Adrenal gland (tissue), 19 donors: ENCODE measurements at regions of chr20 and their contacts with region 1.

Region 1: DNA sequence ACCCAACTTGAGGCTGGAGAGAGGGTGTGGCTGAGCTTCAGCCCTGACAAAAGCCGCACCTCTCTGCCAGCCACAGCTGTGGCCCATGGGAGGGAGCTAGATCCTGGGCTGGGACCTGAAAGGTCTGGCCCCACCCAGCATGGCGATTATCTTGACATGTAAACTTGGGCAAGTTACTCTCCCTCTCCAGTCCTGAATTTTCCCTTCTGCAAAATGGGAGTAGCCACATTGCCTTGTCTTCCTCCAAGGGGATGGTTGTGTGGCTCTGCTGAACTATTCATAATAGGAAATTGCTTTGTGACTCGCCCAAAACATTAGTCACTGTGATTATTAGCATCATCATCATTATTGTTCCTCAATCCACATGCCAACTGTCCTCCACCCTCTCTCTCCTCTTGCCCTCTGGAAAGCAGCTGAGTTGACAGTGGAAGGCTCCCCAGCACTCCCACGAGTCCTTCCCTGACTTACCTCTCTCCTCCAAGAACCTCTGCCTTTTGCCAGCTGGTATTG is 23.0 kb upstream of the RBPJL start:
- DNase-seq: no peak
- H3K4me3 ChIP-seq: no peak overlapping the region
- H3K27ac ChIP-seq: no peak overlapping the region
- H3K4me1 ChIP-seq: no peaks in the 10 kb centered on the region
- H3K27me3 ChIP-seq: peaks cover 9% of the 10 kb centered on the region
- CTCF ChIP-seq: no peak
- POLR2A ChIP-seq: no peak

Region 2: GRCh38 chr20:45095753-45096371 is 187.7 kb before region 1 on chr20:
- intact Hi-C with region 1: loop called (anchors 5 to 10 kb)
- DNase-seq: peak; percentile 55 to 79 (median 70)
- H3K4me3 ChIP-seq: no peak overlapping the region
- H3K27ac ChIP-seq: no peak overlapping the region
- H3K4me1 ChIP-seq: peaks cover 4 to 16% of the 10 kb centered on the region in 2 donors
- H3K27me3 ChIP-seq: peaks cover 32% of the 10 kb centered on the region
- CTCF ChIP-seq: peak; percentile 58 to 77 (median 72)
- POLR2A ChIP-seq: no peak

Region 3: DNA sequence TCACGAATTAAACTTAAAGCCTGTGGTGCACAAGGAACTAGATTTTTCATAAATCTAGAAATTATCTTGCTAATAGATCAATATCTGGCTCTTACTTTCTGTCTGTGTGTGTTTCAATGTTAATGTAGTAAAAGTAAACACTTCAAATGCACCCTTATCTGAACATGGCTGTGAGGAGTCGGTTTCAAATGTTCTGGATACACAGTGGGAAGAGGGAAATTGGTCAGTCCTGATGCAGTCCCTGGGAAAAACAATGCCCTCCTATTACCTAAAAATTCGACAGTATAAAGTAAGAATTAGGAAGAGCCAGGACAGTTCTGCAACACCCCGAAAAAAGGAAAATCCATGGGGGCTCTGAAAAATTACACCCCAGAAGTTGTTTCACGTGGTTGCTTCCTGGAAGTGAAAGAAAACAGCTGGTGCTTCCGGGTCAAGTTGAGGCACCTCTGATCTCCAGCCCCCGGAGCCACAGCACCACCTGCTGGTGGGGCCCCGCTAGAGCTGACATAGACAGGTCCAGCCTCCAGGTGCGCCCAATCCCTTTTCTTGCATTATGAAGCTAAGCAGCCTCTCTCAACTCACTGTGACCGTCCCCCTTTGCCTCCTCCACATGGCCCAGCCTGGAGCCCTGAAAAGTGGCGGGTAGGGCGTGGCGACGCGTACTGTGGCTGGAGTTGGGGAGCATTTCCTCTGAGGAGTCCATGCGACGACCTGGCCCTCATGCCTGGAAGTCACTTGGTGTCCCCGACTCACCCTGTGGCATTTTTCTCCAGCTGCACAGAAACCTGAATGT is 54.1 kb before region 1 on chr20:
- intact Hi-C with region 1: no loop called
- DNase-seq: peak in 2 of 7 donors; percentile 11 to 29
- H3K4me3 ChIP-seq: no peak overlapping the region
- H3K27ac ChIP-seq: no peak overlapping the region
- H3K4me1 ChIP-seq: no peaks in the 10 kb centered on the region
- H3K27me3 ChIP-seq: peaks cover 7% of the 10 kb centered on the region
- CTCF ChIP-seq: peak in 3 of 6 experiments; percentile 9 to 33 (median 24)
- POLR2A ChIP-seq: no peak